Psoas muscle (tissue), 8 donors: ENCODE measurements at regions of chr5 and their contacts with region 1.

Region 1: DNA sequence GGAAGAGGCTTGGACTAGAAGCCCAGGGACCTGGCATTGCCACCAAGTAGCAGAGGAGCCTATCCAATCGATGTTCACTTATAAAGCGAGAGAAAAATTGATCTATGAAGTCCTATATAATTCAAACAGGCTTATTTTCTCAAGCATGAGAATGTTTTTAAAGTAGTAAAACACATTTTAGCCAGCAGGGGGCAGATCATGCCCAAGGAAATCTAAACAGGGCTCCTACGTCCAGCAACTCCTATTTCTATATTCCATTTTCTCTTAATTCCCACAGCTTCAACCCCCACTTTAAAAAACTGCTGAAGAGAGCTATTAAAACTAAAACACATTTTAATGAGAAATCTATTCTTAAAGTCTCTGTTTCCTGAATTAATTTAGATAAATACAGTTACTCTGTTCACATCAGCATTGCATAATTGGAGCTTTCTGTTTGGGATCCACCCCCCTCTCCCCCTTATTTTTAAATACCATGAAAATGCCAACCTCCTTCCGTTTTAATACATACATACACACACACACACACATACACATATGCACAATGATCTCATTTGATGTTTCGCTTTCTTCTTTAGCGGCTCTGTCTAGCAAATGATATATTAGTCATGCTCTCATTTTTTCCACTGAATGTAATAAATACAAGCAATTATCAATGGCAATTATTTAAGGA is 144.9 kb downstream of the MYO10 start:
- DNase-seq: no peak
- ATAC-seq: peak; percentile 46 to 86 (median 70)
- H3K4me3 ChIP-seq: peak overlapping the region; percentile 26
- H3K27ac ChIP-seq: no peak overlapping the region
- H3K4me1 ChIP-seq: no peaks in the 10 kb centered on the region
- H3K27me3 ChIP-seq: no peaks in the 10 kb centered on the region
- CTCF ChIP-seq: peak; percentile 84

Region 2: DNA sequence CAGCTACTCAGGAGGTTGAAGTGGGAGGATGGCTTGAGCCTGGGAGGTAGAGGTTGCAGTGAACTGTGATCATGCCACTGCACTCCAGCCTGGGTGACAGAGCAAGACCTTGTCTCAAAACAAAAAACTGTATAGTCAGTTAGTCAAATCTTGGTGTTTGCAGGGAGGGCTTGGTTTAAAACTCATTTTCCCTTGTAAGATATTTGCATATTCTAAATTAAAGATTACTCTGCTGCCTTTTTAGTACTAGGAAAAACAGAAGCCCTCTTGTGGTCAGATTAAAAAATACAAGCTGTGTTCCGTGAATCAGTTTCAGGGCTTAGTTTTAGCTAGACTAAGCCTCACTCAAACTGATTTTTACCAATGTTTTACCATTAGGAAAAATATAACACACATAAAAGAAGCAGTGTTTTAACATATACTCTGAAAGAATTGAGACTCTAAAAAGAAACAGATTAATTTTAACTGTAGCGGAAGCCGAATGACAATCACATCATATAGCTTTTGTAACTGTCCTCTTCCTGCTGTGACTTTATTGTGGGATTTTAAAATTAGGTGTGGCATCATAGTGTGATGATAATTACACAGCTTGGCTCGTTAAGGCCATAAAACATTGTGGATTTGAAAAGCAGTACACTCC is 341.4 kb after region 1 on chr5:
- intact Hi-C with region 1: loop called (anchors 5 kb)
- DNase-seq: no peak
- ATAC-seq: no peak
- H3K4me3 ChIP-seq: no peak overlapping the region
- H3K27ac ChIP-seq: no peak overlapping the region
- H3K4me1 ChIP-seq: no peaks in the 10 kb centered on the region
- H3K27me3 ChIP-seq: peaks cover 0 to 2% (median 0%) of the 10 kb centered on the region in 3 donors
- CTCF ChIP-seq: peak; percentile 80

Region 3: GRCh38 chr5:17189381-17190036 is 398.3 kb after region 1 on chr5:
- intact Hi-C with region 1: loop called (anchors 2 kb)
- DNase-seq: peak; percentile 63 to 76
- ATAC-seq: peak; percentile 53 to 74 (median 66)
- H3K4me3 ChIP-seq: no peak overlapping the region
- H3K27ac ChIP-seq: no peak overlapping the region
- H3K4me1 ChIP-seq: peaks cover 21% of the 10 kb centered on the region
- H3K27me3 ChIP-seq: no peaks in the 10 kb centered on the region
- CTCF ChIP-seq: peak; percentile 83